Lower leg skin (tissue), 4 donors: ENCODE measurements at regions of chr18 and their contacts with region 1.

Region 1: DNA sequence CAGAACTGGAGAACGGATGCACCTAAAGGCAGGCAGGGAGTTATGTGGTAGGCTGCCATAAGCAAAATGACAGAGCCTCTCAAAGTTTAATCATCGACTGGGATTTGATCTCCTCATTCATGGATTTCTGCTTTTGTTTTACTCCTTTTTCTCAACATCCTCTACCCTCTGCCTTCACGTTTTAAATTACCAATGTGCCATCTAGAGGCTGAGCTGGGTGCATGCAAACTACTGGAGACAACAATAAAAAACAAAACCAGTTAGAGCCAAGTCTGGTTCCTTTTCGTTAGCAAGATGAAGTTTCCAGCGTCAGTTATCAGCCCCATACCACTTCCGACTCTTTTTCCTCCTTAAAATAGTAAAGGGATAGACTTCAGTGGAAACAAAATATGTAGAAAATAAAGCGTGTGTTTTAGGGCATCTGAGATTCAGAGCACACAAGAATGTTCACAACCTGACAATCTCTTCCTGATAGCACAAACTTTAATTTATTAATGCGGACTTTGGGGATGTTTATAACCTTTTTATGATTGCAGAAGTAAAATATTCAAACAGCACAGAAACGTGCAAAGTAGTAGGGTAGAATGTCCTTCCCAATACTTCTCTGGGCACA is 117.0 kb downstream of the LAMA1 start:
- DNase-seq: no peak
- H3K4me3 ChIP-seq: no peak overlapping the region
- CTCF ChIP-seq: no peak
- POLR2A ChIP-seq: no peak

Region 2: GRCh38 chr18:6835345-6835744 is 165.2 kb before region 1 on chr18:
- intact Hi-C with region 1: no loop called
- DNase-seq: no peak
- H3K4me3 ChIP-seq: no peak overlapping the region
- CTCF ChIP-seq: no peak
- POLR2A ChIP-seq: no peak

Region 3: DNA sequence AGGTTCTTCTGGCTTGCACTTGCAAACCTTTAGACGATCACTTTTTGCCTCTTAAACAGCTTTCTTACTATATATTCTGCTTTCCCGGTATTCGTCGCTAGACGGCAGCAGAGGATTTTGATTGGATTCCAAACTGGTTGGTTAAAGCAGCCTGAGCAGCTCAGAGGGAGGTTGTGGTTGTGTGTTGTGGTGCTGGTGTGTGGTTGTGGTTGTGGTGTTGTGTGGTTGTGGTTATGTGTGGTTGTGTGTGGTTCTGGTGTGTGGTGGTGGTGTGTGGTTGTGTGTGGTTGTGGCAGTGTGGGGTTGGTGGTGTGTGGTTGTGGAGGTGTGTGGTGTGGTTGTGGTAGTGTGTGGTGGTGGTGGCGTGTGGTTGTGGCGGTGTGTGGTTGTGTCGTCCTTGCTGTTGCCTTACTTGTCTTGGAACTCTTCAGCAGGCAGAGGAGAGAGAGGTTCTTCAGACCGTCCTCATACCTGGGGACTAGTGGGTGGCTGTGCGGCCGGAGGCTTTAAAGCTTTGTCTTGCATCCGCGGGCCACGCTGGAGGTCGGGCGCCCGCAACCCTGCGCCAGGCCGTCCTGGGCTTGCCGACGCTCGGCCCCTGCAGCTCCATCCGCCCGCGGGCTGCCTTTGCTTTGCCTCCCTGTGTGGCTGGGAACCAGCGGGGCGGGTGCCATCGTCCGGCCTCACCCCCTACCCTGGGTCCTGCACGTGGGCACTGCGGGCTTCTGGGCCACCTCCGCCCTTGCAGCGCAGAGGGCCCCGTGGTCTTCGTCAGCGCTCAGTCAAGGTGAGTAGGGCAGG is 80.3 kb before region 1 on chr18:
- intact Hi-C with region 1: loop called (anchors 5 kb)
- DNase-seq: peak in 1 of 2 donors; percentile 48
- H3K4me3 ChIP-seq: no peak overlapping the region
- CTCF ChIP-seq: peak in 1 of 3 donors; percentile 56
- POLR2A ChIP-seq: no peak